ENCODE measurements at regions of chr4 and their contacts with region 1.

Region 1: GRCh38 chr4:18366892-18367291 is 345.3 kb upstream of the LCORL start:
- DNase-seq: peak; percentile 6
- ATAC-seq: peak; percentile 53; the same call in 1 of the 2 replicates
- H3K4me3 ChIP-seq: no peak overlapping the region
- H3K27ac ChIP-seq: no peak overlapping the region
- H3K4me1 ChIP-seq: no peaks in the 10 kb centered on the region
- H3K27me3 ChIP-seq: no peaks in the 10 kb centered on the region
- CTCF ChIP-seq: peak; percentile 37; the same call in 1 of the 2 replicates
- POLR2A ChIP-seq: no peak
- RAD21 ChIP-seq: peak; percentile 32; the same call in 1 of the 2 replicates

Region 2: DNA sequence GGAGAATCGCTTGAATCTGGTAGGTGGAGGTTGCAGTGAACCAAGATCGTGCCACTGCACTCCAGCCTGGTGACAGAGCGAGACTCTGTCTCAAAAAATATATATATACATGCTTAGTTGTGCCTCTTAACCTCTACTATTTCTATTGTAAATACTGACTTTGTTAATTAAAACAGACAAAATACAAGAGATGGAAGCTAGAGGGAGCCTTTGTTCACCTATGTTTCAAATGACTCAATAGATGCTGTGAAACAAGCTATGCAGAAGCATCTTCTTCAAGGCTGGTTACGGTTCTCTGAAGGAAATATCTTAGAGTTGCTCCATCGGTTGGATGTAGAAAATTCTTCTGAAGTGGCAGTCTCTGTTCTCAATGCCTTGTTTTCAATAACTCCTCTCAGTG is 549.9 kb before region 1 on chr4:
- CTCF ChIA-PET with region 1: no interaction called
- POLR2A ChIA-PET with region 1: no interaction called
- dilution Hi-C with region 1: no loop called
- in situ Hi-C with region 1: no loop called
- intact Hi-C with region 1: loop called (anchors 2 kb)
- DNase-seq: peak; percentile 78
- ATAC-seq: peak; percentile 89
- H3K4me3 ChIP-seq: no peak overlapping the region
- H3K27ac ChIP-seq: no peak overlapping the region
- H3K4me1 ChIP-seq: no peaks in the 10 kb centered on the region
- H3K27me3 ChIP-seq: no peaks in the 10 kb centered on the region
- CTCF ChIP-seq: peak; percentile 70
- POLR2A ChIP-seq: no peak
- RAD21 ChIP-seq: peak; percentile 70

Region 3: DNA sequence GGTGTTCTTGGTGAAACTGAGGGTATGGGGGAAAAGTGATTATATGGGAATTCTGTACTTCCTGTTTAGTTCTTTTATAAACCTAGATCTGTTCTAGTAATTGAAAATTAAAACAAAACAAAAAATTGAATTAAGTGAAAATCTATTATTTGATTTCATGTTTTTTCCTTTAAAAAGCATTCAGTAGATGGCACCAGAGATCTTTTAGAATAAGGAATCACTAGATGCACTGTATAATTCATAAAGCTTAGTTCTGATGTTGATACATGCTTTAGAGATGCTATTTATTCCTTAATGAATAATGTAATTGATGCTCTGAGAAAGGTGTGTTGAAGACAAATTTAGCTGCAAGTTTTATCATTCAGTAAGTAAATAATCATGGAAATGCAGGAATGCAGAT is 432.6 kb before region 1 on chr4:
- CTCF ChIA-PET with region 1: no interaction called
- POLR2A ChIA-PET with region 1: no interaction called
- dilution Hi-C with region 1: no loop called
- in situ Hi-C with region 1: no loop called
- intact Hi-C with region 1: loop called (anchors 10 kb)
- DNase-seq: peak; percentile 14
- ATAC-seq: no peak
- H3K4me3 ChIP-seq: no peak overlapping the region
- H3K27ac ChIP-seq: no peak overlapping the region
- H3K4me1 ChIP-seq: no peaks in the 10 kb centered on the region
- H3K27me3 ChIP-seq: no peaks in the 10 kb centered on the region
- CTCF ChIP-seq: peak; percentile 52
- POLR2A ChIP-seq: no peak
- RAD21 ChIP-seq: peak; percentile 54